ENCODE measurements at regions of chr7 and their contacts with region 1.

Region 1: GRCh38 chr7:105830391-105831301 is 45.8 kb downstream of the ATXN7L1 start:
- DNase-seq: peak; percentile 99
- ATAC-seq: peak; percentile 82
- H3K4me3 ChIP-seq: no peak overlapping the region
- H3K27ac ChIP-seq: peak overlapping the region; percentile 82
- H3K4me1 ChIP-seq: peaks cover 57% of the 10 kb centered on the region
- H3K27me3 ChIP-seq: no peaks in the 10 kb centered on the region
- CTCF ChIP-seq: no peak

Region 2: DNA sequence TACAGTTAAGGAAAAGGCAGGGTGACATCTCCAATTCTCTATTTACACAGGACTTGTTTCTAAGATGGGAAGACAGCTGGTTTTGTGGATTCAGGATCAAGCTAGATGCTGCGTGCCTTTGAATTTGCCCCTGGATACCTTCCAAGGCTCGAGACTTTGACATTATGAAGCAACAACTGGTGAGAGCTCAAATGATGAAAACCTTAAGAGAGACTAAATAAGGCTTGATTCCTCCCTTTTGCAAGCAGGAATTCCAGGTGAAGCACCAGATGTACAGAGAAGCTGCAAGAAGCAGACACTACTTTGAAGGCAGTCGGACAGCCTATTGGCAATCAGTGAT is 35.3 kb before region 1 on chr7:
- CTCF ChIA-PET with region 1: no interaction called
- POLR2A ChIA-PET with region 1: no interaction called
- intact Hi-C with region 1: loop called (anchors 1 kb)
- DNase-seq: peak; percentile 48
- ATAC-seq: 0 out of 2 replicates have a peak, but pooled peaks have one; percentile 2
- H3K4me3 ChIP-seq: peak overlapping the region; percentile 46; the same call in 1 of the 2 replicates
- H3K27ac ChIP-seq: peak overlapping the region; percentile 87
- H3K4me1 ChIP-seq: peaks cover 46% of the 10 kb centered on the region
- H3K27me3 ChIP-seq: no peaks in the 10 kb centered on the region
- CTCF ChIP-seq: no peak

Region 3: GRCh38 chr7:105808703-105809590 is 21.7 kb before region 1 on chr7:
- CTCF ChIA-PET with region 1: no interaction called
- POLR2A ChIA-PET with region 1: no interaction called
- intact Hi-C with region 1: loop called (anchors 2 kb)
- DNase-seq: peak; percentile 85
- ATAC-seq: peak; percentile 89
- H3K4me3 ChIP-seq: no peak overlapping the region
- H3K27ac ChIP-seq: peak overlapping the region; percentile 83
- H3K4me1 ChIP-seq: peaks cover 33% of the 10 kb centered on the region
- H3K27me3 ChIP-seq: no peaks in the 10 kb centered on the region
- CTCF ChIP-seq: 0 out of 2 replicates have a peak, but pooled peaks have one; percentile 10

Measured in PC-3 (cell line).